ENCODE measurements at regions of chr9 and their contacts with region 1.

Region 1: GRCh38 chr9:33076358-33077004 is at the start of gene SMU1:
- H3K4me3 Mint-ChIP-seq: peak within 1 kb of the TSS; percentile 93
- H3K27ac Mint-ChIP-seq: peak within 1 kb of the TSS; percentile 95
- H3K4me1 Mint-ChIP-seq: peaks cover 16% of the 10 kb centered on the region
- H3K27me3 Mint-ChIP-seq: no peaks in the 10 kb centered on the region

Region 2: DNA sequence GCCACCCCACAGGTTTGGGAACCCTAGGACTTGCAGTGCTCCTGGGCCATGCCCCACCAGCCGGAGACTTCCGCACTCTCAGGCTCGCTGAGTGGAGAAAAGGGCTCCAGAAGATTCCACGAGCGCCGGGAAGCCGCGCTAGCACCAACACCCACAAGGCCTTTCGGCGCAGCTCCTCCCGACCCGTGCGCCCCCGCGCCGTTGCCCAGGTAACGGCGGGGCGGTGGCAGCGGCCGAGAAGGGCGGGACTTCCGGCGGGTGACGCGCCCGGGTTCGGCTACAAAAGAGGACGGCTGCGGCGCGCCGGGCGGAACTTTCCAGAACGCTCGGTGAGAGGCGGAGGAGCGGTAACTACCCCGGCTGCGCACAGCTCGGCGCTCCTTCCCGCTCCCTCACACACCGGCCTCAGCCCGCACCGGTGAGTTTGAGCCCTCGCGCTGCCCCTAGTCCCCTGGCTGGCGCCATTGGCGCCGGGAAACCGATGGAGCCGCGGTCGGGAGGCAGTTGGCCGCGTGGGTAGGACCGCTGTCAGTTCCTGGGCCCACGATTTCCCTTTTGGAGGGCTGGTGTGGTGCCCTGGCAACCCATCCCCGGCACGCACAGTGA is 51.4 kb before region 1 on chr9 and contains the start of gene DNAJA1:
- intact Hi-C with region 1: loop called (anchors 10 kb)
- H3K4me3 Mint-ChIP-seq: peak within 1 kb of the TSS; percentile 90
- H3K27ac Mint-ChIP-seq: peak within 1 kb of the TSS; percentile 92
- H3K4me1 Mint-ChIP-seq: peaks cover 62% of the 10 kb centered on the region
- H3K27me3 Mint-ChIP-seq: no peaks in the 10 kb centered on the region

Region 3: GRCh38 chr9:33044127-33044673 is 32.3 kb before region 1 on chr9:
- intact Hi-C with region 1: loop called (anchors 5 kb)
- H3K4me3 Mint-ChIP-seq: peak overlapping the region; percentile 77
- H3K27ac Mint-ChIP-seq: peak overlapping the region; percentile 90
- H3K4me1 Mint-ChIP-seq: peaks cover 34% of the 10 kb centered on the region
- H3K27me3 Mint-ChIP-seq: no peaks in the 10 kb centered on the region

Region 4: GRCh38 chr9:33065157-33066076 is 11.1 kb before region 1 on chr9:
- intact Hi-C with region 1: no loop called
- H3K4me3 Mint-ChIP-seq: peak overlapping the region; percentile 39
- H3K27ac Mint-ChIP-seq: peak overlapping the region; percentile 77
- H3K4me1 Mint-ChIP-seq: peaks cover 27% of the 10 kb centered on the region
- H3K27me3 Mint-ChIP-seq: no peaks in the 10 kb centered on the region

Region 5: GRCh38 chr9:33116860-33117259 is 40.4 kb after region 1 on chr9:
- intact Hi-C with region 1: loop called (anchors 5 kb)
- H3K4me3 Mint-ChIP-seq: peak overlapping the region; percentile 37
- H3K27ac Mint-ChIP-seq: peak overlapping the region; percentile 91
- H3K4me1 Mint-ChIP-seq: peaks cover 32% of the 10 kb centered on the region
- H3K27me3 Mint-ChIP-seq: no peaks in the 10 kb centered on the region

Region 6: GRCh38 chr9:33225319-33226149 is 149.1 kb after region 1 on chr9:
- intact Hi-C with region 1: loop called (anchors 1 kb)
- H3K4me3 Mint-ChIP-seq: peak overlapping the region; percentile 4
- H3K27ac Mint-ChIP-seq: peak overlapping the region; percentile 90
- H3K4me1 Mint-ChIP-seq: peaks cover 62% of the 10 kb centered on the region
- H3K27me3 Mint-ChIP-seq: no peaks in the 10 kb centered on the region

Region 7: DNA sequence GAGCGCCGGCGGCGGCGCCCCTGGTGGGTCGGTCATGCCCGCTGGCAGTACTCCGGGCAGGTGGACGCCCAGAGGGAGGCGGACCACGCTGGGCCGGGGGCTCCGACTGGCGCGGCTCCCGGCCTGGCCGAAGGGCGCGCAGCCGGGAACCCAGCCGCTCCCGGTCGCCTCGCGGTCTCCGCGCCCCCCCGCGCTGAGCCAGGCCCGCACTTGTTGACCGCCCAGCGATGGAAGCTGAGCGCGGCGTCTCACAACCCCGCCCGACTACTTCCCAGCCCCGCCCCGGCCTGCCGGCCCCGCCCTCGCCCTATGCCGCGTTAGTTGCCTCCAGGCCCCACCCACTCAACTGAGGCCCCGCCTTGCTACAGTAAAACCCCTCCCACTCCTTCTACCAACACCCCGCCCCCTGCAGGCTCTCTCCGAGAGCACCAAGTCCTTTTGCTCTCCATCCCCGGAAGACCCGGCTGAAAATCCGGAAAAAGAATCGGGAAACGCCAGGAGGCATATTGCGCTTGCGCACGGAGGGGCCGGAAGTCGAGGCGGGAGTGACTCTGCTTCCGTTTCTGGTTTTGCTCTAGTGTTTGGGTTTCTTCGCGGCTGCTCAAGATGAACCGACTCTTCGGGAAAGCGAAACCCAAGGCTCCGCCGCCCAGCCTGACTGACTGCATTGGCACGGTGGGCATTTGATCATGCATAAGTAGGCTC is 188.1 kb after region 1 on chr9 and contains the starts of genes BAG1 and CHMP5:
- intact Hi-C with region 1: loop called (anchors 1 kb)
- H3K4me3 Mint-ChIP-seq: peak within 1 kb of the TSS; percentile 84
- H3K27ac Mint-ChIP-seq: peak within 1 kb of the TSS; percentile 93
- H3K4me1 Mint-ChIP-seq: peaks cover 41% of the 10 kb centered on the region
- H3K27me3 Mint-ChIP-seq: no peaks in the 10 kb centered on the region